Activated naive CD4-positive, alpha-beta T cell treated with anti-CD3 and anti-CD28 coated beads for 36 hours (primary cell): ENCODE measurements at regions of chr6 and their contacts with region 1.

Region 1: GRCh38 chr6:129730477-129731165 is 20.6 kb upstream of the ARHGAP18 start:
- DNase-seq: peak; percentile 47
- H3K4me3 Mint-ChIP-seq: no peak overlapping the region
- H3K27ac Mint-ChIP-seq: no peak overlapping the region
- H3K4me1 Mint-ChIP-seq: peaks cover 10% of the 10 kb centered on the region
- H3K27me3 Mint-ChIP-seq: no peaks in the 10 kb centered on the region

Region 2: GRCh38 chr6:129621247-129621646 is 109.4 kb before region 1 on chr6:
- CTCF ChIA-PET with region 1: interaction called, 8 read pairs
- intact Hi-C with region 1: loop called (anchors 1 kb)
- DNase-seq: peak; percentile 54
- H3K4me3 Mint-ChIP-seq: no peak overlapping the region
- H3K27ac Mint-ChIP-seq: no peak overlapping the region
- H3K4me1 Mint-ChIP-seq: no peaks in the 10 kb centered on the region
- H3K27me3 Mint-ChIP-seq: no peaks in the 10 kb centered on the region